ENCODE measurements at regions of chr4 and their contacts with region 1.

Region 1: GRCh38 chr4:56387023-56388001 is at the start of gene AASDH:
- DNase-seq: peak; percentile 99
- H3K4me3 Mint-ChIP-seq: peak within 1 kb of the TSS; percentile 88
- H3K27ac Mint-ChIP-seq: peak within 1 kb of the TSS; percentile 96
- H3K4me1 Mint-ChIP-seq: peaks cover 29% of the 10 kb centered on the region
- H3K27me3 Mint-ChIP-seq: no peaks in the 10 kb centered on the region
- total RNA-seq, gene AASDH: 10.5 and 11.8 TPM in 2 replicates

Region 2: DNA sequence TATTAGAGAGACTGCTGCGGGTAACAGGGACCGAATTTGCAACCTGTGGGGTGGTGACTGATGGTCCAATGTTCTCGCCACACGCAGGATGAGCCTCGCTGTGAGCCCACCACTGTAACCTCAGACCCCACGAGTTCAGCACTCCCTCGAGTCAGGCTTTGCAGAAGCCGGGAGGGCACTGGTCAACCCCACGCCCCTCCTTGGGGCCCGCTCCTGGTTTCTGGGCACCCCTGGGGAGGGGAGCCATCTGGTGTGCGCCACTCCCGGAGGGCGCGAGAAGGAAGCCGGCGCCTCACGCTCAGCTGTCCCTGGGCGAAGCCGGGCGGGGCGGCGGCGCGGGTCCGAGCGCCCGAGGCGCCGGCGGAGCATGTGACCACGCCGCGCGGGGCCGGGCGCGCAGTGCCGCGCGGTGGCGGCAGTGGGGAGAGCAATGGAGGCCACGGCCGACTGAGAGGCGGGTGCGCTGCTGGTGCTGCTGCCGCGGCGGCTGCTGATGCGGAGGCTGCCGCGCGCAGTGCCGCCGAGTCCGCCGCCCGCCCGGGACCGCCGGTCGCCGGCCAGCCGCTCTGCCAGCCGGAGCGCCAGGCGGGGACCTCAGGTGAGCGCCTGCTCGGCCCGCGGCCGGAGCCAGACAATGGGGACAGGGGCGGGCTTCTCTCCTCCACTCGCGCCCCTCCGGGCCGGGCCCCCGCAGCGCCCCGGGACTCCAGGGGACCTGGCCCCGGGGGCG is 338.4 kb before region 1 on chr4:
- intact Hi-C with region 1: loop called (anchors 1 kb)
- DNase-seq: peak; percentile 89
- H3K4me3 Mint-ChIP-seq: peak overlapping the region; percentile 80
- H3K27ac Mint-ChIP-seq: no peak overlapping the region
- H3K4me1 Mint-ChIP-seq: peaks cover 13% of the 10 kb centered on the region
- H3K27me3 Mint-ChIP-seq: peaks cover 54% of the 10 kb centered on the region

Region 3: DNA sequence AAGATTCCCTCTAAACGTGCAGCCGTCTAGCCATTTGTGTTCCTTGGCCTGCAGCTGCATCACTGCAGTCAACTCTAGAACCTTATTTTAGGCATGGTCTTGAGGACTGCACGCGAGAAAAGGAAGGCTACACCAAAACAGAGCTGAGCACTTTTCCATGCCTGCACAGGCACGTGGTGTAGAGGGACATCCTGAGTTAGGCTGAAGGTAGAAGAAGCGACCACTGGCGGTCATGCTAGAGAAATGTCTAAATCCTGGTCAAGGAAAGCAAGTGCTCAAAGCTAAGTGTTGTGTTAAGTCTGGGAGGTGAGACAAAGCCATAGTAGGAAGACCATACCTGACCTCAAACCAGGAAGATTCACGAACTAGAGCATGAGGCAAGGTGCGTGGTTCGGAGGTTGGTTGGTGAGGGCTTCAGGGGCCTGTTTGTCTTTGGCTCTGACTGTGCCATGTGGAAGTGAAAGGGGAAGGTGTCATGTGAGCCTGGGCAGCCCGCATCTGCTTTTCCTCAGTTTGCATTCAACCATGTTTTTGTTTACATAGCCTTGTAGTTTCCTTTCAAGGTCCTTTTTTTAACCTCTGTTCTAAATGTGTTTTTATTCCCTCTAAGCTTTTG is 203.9 kb before region 1 on chr4:
- intact Hi-C with region 1: loop called (anchors 5 kb)
- DNase-seq: no peak
- H3K4me3 Mint-ChIP-seq: no peak overlapping the region
- H3K27ac Mint-ChIP-seq: no peak overlapping the region
- H3K4me1 Mint-ChIP-seq: peaks cover 27% of the 10 kb centered on the region
- H3K27me3 Mint-ChIP-seq: no peaks in the 10 kb centered on the region

Region 4: GRCh38 chr4:56405016-56405415 is 17.7 kb after region 1 on chr4:
- intact Hi-C with region 1: loop called (anchors 2 kb)
- DNase-seq: no peak
- H3K4me3 Mint-ChIP-seq: no peak overlapping the region
- H3K27ac Mint-ChIP-seq: no peak overlapping the region
- H3K4me1 Mint-ChIP-seq: peaks cover 3% of the 10 kb centered on the region
- H3K27me3 Mint-ChIP-seq: no peaks in the 10 kb centered on the region

Region 5: DNA sequence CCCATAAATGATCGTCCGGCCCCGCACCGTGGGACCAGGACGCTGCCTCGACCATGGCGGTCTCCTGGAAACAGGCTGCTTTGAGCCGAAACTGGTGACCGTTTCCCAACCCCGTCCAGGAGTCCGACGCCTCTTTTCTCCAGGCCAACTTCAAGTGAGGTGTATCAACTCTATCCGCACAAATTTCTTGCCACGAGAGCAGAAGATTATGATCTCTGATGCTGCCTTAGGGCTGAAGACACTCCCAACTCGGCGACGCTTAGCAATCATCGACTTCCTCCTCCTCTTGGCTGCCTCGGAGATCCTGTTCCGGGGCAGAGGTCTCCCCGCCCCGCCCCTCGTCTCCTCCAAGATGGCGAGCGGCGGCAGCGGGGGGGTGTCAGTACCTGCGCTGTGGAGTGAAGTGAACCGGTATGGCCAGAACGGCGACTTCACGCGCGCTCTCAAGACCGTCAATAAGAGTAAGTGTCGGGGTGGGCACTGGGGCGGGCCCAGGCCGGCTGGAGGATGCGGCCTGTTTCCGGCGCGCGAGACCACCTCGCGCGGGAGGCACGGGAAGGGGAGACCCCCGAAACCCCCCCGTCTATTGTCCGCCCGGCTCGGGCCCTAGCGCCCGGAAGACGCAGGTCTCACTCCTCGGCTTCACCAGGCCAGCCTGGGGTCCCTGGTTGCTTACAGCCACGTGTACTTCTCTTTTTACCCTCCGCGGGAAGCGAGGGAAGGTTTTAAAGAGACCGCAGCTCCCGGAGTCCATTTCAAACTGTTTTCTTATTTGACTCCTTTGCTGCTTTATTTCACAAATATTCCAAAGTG is 80.2 kb after region 1 on chr4 and contains the start of gene SRP72:
- intact Hi-C with region 1: loop called (anchors 1 kb)
- DNase-seq: peak; percentile 97
- H3K4me3 Mint-ChIP-seq: peak within 1 kb of the TSS; percentile 94
- H3K27ac Mint-ChIP-seq: peak within 1 kb of the TSS; percentile 95
- H3K4me1 Mint-ChIP-seq: peaks cover 45% of the 10 kb centered on the region
- H3K27me3 Mint-ChIP-seq: no peaks in the 10 kb centered on the region
- total RNA-seq, gene SRP72: 202 and 209 TPM in 2 replicates

Region 6: DNA sequence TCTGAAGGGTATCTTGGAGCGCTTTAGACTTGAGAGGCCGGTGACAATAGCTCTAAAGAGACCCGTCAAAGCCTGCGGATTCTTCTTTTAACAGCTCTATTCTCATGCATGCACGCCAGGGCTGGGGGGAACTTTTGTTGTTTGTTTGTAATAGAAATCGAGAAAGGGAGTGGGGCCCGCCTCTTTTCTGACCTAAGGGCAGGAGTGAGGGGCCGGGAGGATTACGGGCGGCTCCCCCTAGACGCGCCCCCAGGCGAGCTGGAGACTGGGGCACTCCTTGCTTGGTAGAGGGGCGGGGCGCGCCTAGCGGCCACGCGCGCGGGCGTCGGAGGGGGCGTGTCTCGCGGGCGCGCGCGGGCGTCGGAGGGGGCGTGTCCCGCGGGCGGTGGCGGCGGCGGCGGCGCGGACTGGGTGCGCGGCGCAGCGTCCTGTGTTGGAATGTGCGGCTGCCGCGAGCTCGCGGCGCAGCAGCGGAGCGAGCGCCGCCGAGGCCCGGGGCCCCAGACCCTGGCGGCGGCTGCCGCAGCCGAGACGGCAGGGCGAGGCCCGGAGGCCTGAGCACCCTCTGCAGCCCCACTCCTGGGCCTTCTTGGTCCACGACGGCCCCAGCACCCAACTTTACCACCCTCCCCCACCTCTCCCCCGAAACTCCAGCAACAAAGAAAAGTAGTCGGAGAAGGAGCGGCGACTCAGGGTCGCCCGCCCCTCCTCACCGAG is 520.3 kb after region 1 on chr4 and contains the start of gene REST:
- intact Hi-C with region 1: loop called (anchors 2 kb)
- DNase-seq: peak; percentile 96
- H3K4me3 Mint-ChIP-seq: peak within 1 kb of the TSS; percentile 92
- H3K27ac Mint-ChIP-seq: peak within 1 kb of the TSS; percentile 87
- H3K4me1 Mint-ChIP-seq: peaks cover 35% of the 10 kb centered on the region
- H3K27me3 Mint-ChIP-seq: peaks cover 9% of the 10 kb centered on the region
- total RNA-seq, gene REST: 53.4 and 56.0 TPM in 2 replicates

Region 7: GRCh38 chr4:56977321-56978012 is 590.2 kb after region 1 on chr4 and contains the start of gene NOA1:
- intact Hi-C with region 1: loop called (anchors 1 kb)
- DNase-seq: peak; percentile 100
- H3K4me3 Mint-ChIP-seq: peak within 1 kb of the TSS; percentile 98
- H3K27ac Mint-ChIP-seq: peak within 1 kb of the TSS; percentile 98
- H3K4me1 Mint-ChIP-seq: peaks cover 50% of the 10 kb centered on the region
- H3K27me3 Mint-ChIP-seq: peaks cover 2% of the 10 kb centered on the region
- total RNA-seq, gene NOA1: 17.7 and 18.5 TPM in 2 replicates